A549 (cell line): ENCODE measurements at regions of chr1 and their contacts with region 1.

Region 1: GRCh38 chr1:184222652-184223052 is 164.2 kb upstream of the C1orf21 start:
- DNase-seq: peak; percentile 35 to 49
- ATAC-seq: peak; percentile 61 to 76; a peak in 4 of 6 replicates
- H3K4me3 ChIP-seq: peak overlapping the region; percentile 46
- H3K27ac ChIP-seq: peak overlapping the region; percentile 10 to 36; a peak in 3 of 6 replicates
- H3K4me1 ChIP-seq: no peaks in the 10 kb centered on the region
- CTCF ChIP-seq: peak; percentile 79
- EP300 ChIP-seq: no peak
- POLR2A ChIP-seq: no peak
- RAD21 ChIP-seq: peak; percentile 72 to 76

Region 2: DNA sequence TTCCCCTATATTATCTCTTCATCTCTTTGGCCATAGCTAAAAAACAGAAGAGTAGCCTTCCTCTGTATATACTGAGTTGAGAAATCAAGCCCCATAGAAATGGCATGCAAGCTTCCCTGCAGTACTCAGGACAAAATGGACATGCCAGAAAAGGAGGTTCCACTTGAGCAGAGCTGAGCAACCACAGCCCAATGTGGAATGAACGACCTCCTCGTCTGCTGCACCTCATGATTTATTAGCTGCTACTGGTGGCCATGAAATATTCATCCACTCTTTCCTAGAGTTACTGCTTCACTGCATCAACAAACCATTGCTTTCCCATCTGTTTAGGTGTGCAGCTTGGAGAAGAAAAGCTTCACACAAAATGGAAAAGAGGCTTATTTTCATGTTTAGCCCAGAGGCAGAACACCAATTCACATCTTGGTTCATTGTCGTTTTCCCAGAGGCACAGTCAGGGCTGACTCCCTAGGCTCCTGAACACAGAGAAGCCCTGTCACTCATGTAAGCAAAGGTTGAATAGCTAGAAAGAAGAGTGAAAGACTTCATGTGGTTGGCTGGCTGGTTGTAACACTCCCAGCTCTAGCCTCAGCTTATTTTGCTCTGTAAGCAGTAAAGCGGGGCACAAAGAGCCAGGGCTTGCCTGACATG is 23.1 kb before region 1 on chr1:
- CTCF ChIA-PET with region 1: interaction called, 13 read pairs
- POLR2A ChIA-PET with region 1: no interaction called
- DNase-seq: no peak
- ATAC-seq: no peak
- H3K4me3 ChIP-seq: no peak overlapping the region
- H3K27ac ChIP-seq: no peak overlapping the region
- H3K4me1 ChIP-seq: no peaks in the 10 kb centered on the region
- CTCF ChIP-seq: no peak
- EP300 ChIP-seq: no peak
- POLR2A ChIP-seq: no peak
- RAD21 ChIP-seq: no peak

Region 3: DNA sequence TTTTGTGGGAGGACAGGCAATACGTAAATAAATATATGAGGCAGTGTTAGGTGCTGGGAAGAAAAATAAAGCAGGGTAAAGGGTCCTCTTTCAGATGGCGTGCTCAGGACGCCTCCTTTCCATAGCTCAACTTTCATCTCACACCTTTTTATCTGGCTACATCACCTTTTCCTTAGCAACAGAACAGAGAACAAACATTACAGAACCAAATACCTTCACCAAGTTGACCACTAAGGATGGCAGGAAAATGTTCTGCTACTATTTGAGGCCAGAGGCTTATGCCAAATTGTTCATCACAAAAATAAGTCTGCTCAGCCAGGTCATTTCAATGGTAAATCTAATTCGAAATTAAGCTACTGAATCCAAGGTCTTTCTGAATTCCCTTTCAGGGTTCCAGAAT is 14.9 kb after region 1 on chr1:
- CTCF ChIA-PET with region 1: interaction called, 14 read pairs
- POLR2A ChIA-PET with region 1: no interaction called
- DNase-seq: no peak
- ATAC-seq: no peak
- H3K4me3 ChIP-seq: no peak overlapping the region
- H3K27ac ChIP-seq: no peak overlapping the region
- H3K4me1 ChIP-seq: no peaks in the 10 kb centered on the region
- CTCF ChIP-seq: no peak
- EP300 ChIP-seq: no peak
- POLR2A ChIP-seq: no peak
- RAD21 ChIP-seq: no peak